ENCODE measurements at regions of chr20 and their contacts with region 1.

Region 1: GRCh38 chr20:51624157-51624731 is 81.7 kb upstream of the NFATC2 start:
- DNase-seq: peak; percentile 53 to 74
- ATAC-seq: peak; percentile 55 to 70 (median 60)
- H3K4me3 ChIP-seq: no peak overlapping the region
- H3K4me3 Mint-ChIP-seq: no peak overlapping the region
- H3K27ac ChIP-seq: no peak overlapping the region
- H3K27ac Mint-ChIP-seq: no peak overlapping the region
- H3K4me1 ChIP-seq: no peaks in the 10 kb centered on the region
- H3K4me1 Mint-ChIP-seq: no peaks in the 10 kb centered on the region
- H3K27me3 ChIP-seq: no peaks in the 10 kb centered on the region
- H3K27me3 Mint-ChIP-seq: no peaks in the 10 kb centered on the region
- CTCF ChIP-seq: peak; percentile 63

Region 2: GRCh38 chr20:50987592-50988210 is 636.5 kb before region 1 on chr20:
- intact Hi-C with region 1: loop called (anchors 1 kb)
- DNase-seq: peak; percentile 31 to 89
- ATAC-seq: peak; percentile 86 to 100 (median 99)
- H3K4me3 ChIP-seq: no peak overlapping the region
- H3K4me3 Mint-ChIP-seq: no peak overlapping the region
- H3K27ac ChIP-seq: no peak overlapping the region
- H3K27ac Mint-ChIP-seq: no peak overlapping the region
- H3K4me1 ChIP-seq: peaks cover under 1% of the 10 kb centered on the region
- H3K4me1 Mint-ChIP-seq: no peaks in the 10 kb centered on the region
- H3K27me3 ChIP-seq: no peaks in the 10 kb centered on the region
- H3K27me3 Mint-ChIP-seq: peaks cover 18 to 21% of the 10 kb centered on the region in 2 donors
- CTCF ChIP-seq: peak; percentile 84

Region 3: GRCh38 chr20:51095633-51096513 is 528.4 kb before region 1 on chr20:
- intact Hi-C with region 1: no loop called
- DNase-seq: no peak
- ATAC-seq: no peak
- H3K4me3 ChIP-seq: no peak overlapping the region
- H3K4me3 Mint-ChIP-seq: no peak overlapping the region
- H3K27ac ChIP-seq: no peak overlapping the region
- H3K27ac Mint-ChIP-seq: no peak overlapping the region
- H3K4me1 ChIP-seq: peaks cover 3% of the 10 kb centered on the region
- H3K4me1 Mint-ChIP-seq: peaks cover 9 to 13% of the 10 kb centered on the region in 2 donors
- H3K27me3 ChIP-seq: no peaks in the 10 kb centered on the region
- H3K27me3 Mint-ChIP-seq: peaks cover 22 to 45% of the 10 kb centered on the region in 2 donors
- CTCF ChIP-seq: no peak

Region 4: GRCh38 chr20:51220293-51220706 is 403.9 kb before region 1 on chr20:
- intact Hi-C with region 1: loop called (anchors 10 kb)
- DNase-seq: peak; percentile 55 to 64
- ATAC-seq: peak; percentile 75 to 87 (median 77)
- H3K4me3 ChIP-seq: no peak overlapping the region
- H3K4me3 Mint-ChIP-seq: no peak overlapping the region
- H3K27ac ChIP-seq: no peak overlapping the region
- H3K27ac Mint-ChIP-seq: no peak overlapping the region
- H3K4me1 ChIP-seq: no peaks in the 10 kb centered on the region
- H3K4me1 Mint-ChIP-seq: peaks cover 5 to 9% of the 10 kb centered on the region in 2 donors
- H3K27me3 ChIP-seq: peaks cover 6% of the 10 kb centered on the region
- H3K27me3 Mint-ChIP-seq: peaks cover 34 to 59% of the 10 kb centered on the region in 2 donors
- CTCF ChIP-seq: peak; percentile 84

Region 5: DNA sequence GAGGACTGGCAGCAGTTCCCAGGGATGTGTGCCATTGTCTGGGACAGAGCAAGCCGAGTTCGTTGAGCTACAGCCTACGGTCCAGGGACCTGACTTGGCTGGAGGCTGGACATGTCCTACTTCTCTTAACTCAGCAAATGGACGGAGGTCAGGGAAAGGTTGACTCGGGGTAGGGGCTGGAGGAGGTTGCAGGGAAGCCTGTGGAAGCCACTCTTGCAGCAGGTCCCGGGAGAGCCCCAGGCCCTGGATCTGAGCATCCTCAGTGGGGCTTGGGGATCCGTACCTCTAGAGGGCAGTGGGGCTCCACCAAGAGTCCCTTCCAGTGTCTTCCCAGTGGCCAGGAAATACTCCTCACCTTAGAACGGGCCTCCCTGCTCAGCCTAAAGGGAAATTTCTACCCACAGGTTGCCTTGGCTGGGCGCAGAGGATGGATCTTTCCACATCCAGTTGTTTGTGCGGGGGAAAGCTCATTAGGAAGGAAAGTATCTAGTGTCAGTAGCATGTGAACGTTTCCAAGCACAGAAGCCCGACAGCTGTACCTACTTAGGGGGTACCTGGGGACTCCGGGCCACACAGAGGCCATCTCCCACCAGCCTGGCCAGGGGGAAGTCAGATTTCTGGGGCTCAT is 252.0 kb before region 1 on chr20:
- intact Hi-C with region 1: loop called (anchors 1 kb)
- DNase-seq: peak; percentile 47 to 77
- ATAC-seq: peak; percentile 41 to 89 (median 89)
- H3K4me3 ChIP-seq: no peak overlapping the region
- H3K4me3 Mint-ChIP-seq: no peak overlapping the region
- H3K27ac ChIP-seq: no peak overlapping the region
- H3K27ac Mint-ChIP-seq: no peak overlapping the region
- H3K4me1 ChIP-seq: peaks cover 18% of the 10 kb centered on the region
- H3K4me1 Mint-ChIP-seq: peaks cover 17 to 18% of the 10 kb centered on the region in 2 donors
- H3K27me3 ChIP-seq: no peaks in the 10 kb centered on the region
- H3K27me3 Mint-ChIP-seq: no peaks in the 10 kb centered on the region
- CTCF ChIP-seq: peak; percentile 77

Region 6: GRCh38 chr20:51562332-51563155 is 61.7 kb before region 1 on chr20:
- intact Hi-C with region 1: no loop called
- DNase-seq: peak in 1 of 2 donors; percentile 43
- ATAC-seq: peak in 2 of 3 donors; percentile 34 to 64
- H3K4me3 ChIP-seq: no peak overlapping the region
- H3K4me3 Mint-ChIP-seq: peak overlapping the region; percentile 74
- H3K27ac ChIP-seq: no peak overlapping the region
- H3K27ac Mint-ChIP-seq: peak overlapping the region in 1 of 2 donors; percentile 8
- H3K4me1 ChIP-seq: peaks cover 23% of the 10 kb centered on the region
- H3K4me1 Mint-ChIP-seq: peaks cover 24 to 35% of the 10 kb centered on the region in 2 donors
- H3K27me3 ChIP-seq: peaks cover 43% of the 10 kb centered on the region
- H3K27me3 Mint-ChIP-seq: peaks cover 27 to 35% of the 10 kb centered on the region in 2 donors
- CTCF ChIP-seq: no peak

Measured in natural killer cell (primary cell).